Naive thymus-derived CD4-positive, alpha-beta T cell (primary cell): ENCODE measurements at regions of chr6 and their contacts with region 1.

Region 1: DNA sequence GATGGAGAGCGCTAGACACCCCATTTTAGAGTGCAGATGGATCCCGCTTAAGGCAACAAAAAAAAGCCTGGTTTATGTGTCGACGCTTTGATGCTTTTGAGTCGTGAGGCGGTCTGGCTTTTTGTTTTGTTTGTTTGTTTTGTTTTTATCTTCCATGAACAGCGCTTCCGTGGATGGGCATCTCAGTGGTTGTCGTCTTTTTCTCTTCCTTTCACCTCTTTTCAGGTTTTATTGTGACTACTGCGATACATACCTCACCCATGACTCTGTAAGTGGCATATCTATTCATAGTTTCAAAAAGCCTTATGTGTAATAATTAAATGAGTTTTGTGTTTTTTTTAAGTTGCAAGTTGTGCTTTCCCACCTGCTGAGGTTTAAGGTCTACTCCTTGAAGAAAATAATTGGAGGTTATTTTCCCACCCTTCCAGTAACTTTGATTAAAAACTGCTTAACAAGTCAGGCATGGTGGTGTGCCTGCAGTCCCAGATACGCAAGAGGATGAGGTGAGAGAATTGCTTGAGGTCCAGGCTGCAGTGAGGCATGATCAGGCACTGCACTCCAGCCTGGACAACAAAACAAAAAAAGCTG is 476 bp downstream of the SNRPC start:
- DNase-seq: no peak
- ATAC-seq: no peak
- H3K4me3 ChIP-seq: peak overlapping the region; percentile 94
- H3K4me3 Mint-ChIP-seq: no peak overlapping the region
- H3K27ac ChIP-seq: peak overlapping the region; percentile 94
- H3K27ac Mint-ChIP-seq: no peak overlapping the region
- H3K4me1 ChIP-seq: peaks cover 7 to 12% of the 10 kb centered on the region in 2 donors
- H3K4me1 Mint-ChIP-seq: peaks cover 3 to 27% (median 14%) of the 10 kb centered on the region in 7 donors
- H3K27me3 ChIP-seq: no peaks in the 10 kb centered on the region
- H3K27me3 Mint-ChIP-seq: no peaks in the 10 kb centered on the region

Region 2: GRCh38 chr6:34392497-34393190 is 365.1 kb before region 1 on chr6 and contains the start of gene NUDT3:
- CTCF ChIA-PET with region 1: no interaction called
- POLR2A ChIA-PET with region 1: no interaction called
- intact Hi-C with region 1: loop called in 1 of 2 experiments (anchors 2 kb)
- DNase-seq: peak; percentile 88 to 98 (median 93)
- ATAC-seq: peak; percentile 93
- H3K4me3 ChIP-seq: peak within 1 kb of the TSS; percentile 92
- H3K4me3 Mint-ChIP-seq: peak within 1 kb of the TSS in 4 of 10 donors; percentile 79 to 99 (median 98)
- H3K27ac ChIP-seq: peak within 1 kb of the TSS; percentile 85
- H3K27ac Mint-ChIP-seq: peak within 1 kb of the TSS in 8 of 9 donors; percentile 89 to 95 (median 92)
- H3K4me1 ChIP-seq: peaks cover 11 to 16% of the 10 kb centered on the region in 2 donors
- H3K4me1 Mint-ChIP-seq: peaks cover 0 to 28% (median 23%) of the 10 kb centered on the region in 7 donors
- H3K27me3 ChIP-seq: no peaks in the 10 kb centered on the region
- H3K27me3 Mint-ChIP-seq: peaks cover 0 to 2% (median 0%) of the 10 kb centered on the region in 5 donors
- total RNA-seq, gene NUDT3: 16.2 to 29.7 (median 25.4) TPM

Region 3: GRCh38 chr6:34526992-34527728 is 230.6 kb before region 1 on chr6:
- CTCF ChIA-PET with region 1: interaction called, 3 read pairs
- POLR2A ChIA-PET with region 1: no interaction called
- intact Hi-C with region 1: loop called in 1 of 2 experiments (anchors 1 kb)
- DNase-seq: peak; percentile 88 to 96 (median 94)
- ATAC-seq: peak; percentile 100
- H3K4me3 ChIP-seq: peak overlapping the region; percentile 33
- H3K4me3 Mint-ChIP-seq: peak overlapping the region; percentile 20 to 69 (median 46)
- H3K27ac ChIP-seq: peak overlapping the region; percentile 70
- H3K27ac Mint-ChIP-seq: peak overlapping the region; percentile 12 to 89 (median 72)
- H3K4me1 ChIP-seq: peaks cover 7 to 14% of the 10 kb centered on the region in 2 donors
- H3K4me1 Mint-ChIP-seq: peaks cover 4 to 12% (median 8%) of the 10 kb centered on the region in 7 donors
- H3K27me3 ChIP-seq: no peaks in the 10 kb centered on the region
- H3K27me3 Mint-ChIP-seq: peaks cover 0 to 2% (median 0%) of the 10 kb centered on the region in 5 donors

Region 4: GRCh38 chr6:34638834-34639736 is 118.7 kb before region 1 on chr6:
- CTCF ChIA-PET with region 1: no interaction called
- POLR2A ChIA-PET with region 1: no interaction called
- intact Hi-C with region 1: loop called in 1 of 2 experiments (anchors 5 kb)
- DNase-seq: no peak
- ATAC-seq: no peak
- H3K4me3 ChIP-seq: no peak overlapping the region
- H3K4me3 Mint-ChIP-seq: no peak overlapping the region
- H3K27ac ChIP-seq: no peak overlapping the region
- H3K27ac Mint-ChIP-seq: peak overlapping the region in 2 of 9 donors; percentile 5 to 39
- H3K4me1 ChIP-seq: no peaks in the 10 kb centered on the region
- H3K4me1 Mint-ChIP-seq: peaks cover 0 to 20% (median 8%) of the 10 kb centered on the region in 7 donors
- H3K27me3 ChIP-seq: no peaks in the 10 kb centered on the region
- H3K27me3 Mint-ChIP-seq: no peaks in the 10 kb centered on the region

Region 5: GRCh38 chr6:34671801-34672656 is 85.8 kb before region 1 on chr6:
- CTCF ChIA-PET with region 1: no interaction called
- POLR2A ChIA-PET with region 1: interaction called, 3 read pairs
- intact Hi-C with region 1: loop called (anchors 1 to 2 kb)
- DNase-seq: peak; percentile 27 to 83 (median 71)
- ATAC-seq: peak; percentile 99
- H3K4me3 ChIP-seq: peak overlapping the region; percentile 37
- H3K4me3 Mint-ChIP-seq: peak overlapping the region; percentile 72 to 88 (median 81)
- H3K27ac ChIP-seq: peak overlapping the region; percentile 75
- H3K27ac Mint-ChIP-seq: peak overlapping the region; percentile 92 to 97 (median 96)
- H3K4me1 ChIP-seq: peaks cover 35 to 48% of the 10 kb centered on the region in 2 donors
- H3K4me1 Mint-ChIP-seq: peaks cover 61 to 84% (median 74%) of the 10 kb centered on the region in 7 donors
- H3K27me3 ChIP-seq: no peaks in the 10 kb centered on the region
- H3K27me3 Mint-ChIP-seq: no peaks in the 10 kb centered on the region

Region 6: GRCh38 chr6:34791701-34792235 is 34.0 kb after region 1 on chr6 and contains the start of gene BLTP3A:
- CTCF ChIA-PET with region 1: interaction called, 3 read pairs
- POLR2A ChIA-PET with region 1: interaction called, 27 read pairs
- intact Hi-C with region 1: loop called (anchors 1 kb)
- DNase-seq: peak; percentile 60 to 85 (median 73)
- ATAC-seq: peak; percentile 97
- H3K4me3 ChIP-seq: peak within 1 kb of the TSS; percentile 100
- H3K4me3 Mint-ChIP-seq: peak within 1 kb of the TSS; percentile 92 to 100 (median 98)
- H3K27ac ChIP-seq: peak within 1 kb of the TSS; percentile 79
- H3K27ac Mint-ChIP-seq: peak within 1 kb of the TSS; percentile 88 to 97 (median 96)
- H3K4me1 ChIP-seq: peaks cover 8 to 15% of the 10 kb centered on the region in 2 donors
- H3K4me1 Mint-ChIP-seq: peaks cover 24 to 38% (median 30%) of the 10 kb centered on the region in 7 donors
- H3K27me3 ChIP-seq: no peaks in the 10 kb centered on the region
- H3K27me3 Mint-ChIP-seq: no peaks in the 10 kb centered on the region
- total RNA-seq, gene BLTP3A: 10.7 to 12.9 (median 11.9) TPM

Region 7: DNA sequence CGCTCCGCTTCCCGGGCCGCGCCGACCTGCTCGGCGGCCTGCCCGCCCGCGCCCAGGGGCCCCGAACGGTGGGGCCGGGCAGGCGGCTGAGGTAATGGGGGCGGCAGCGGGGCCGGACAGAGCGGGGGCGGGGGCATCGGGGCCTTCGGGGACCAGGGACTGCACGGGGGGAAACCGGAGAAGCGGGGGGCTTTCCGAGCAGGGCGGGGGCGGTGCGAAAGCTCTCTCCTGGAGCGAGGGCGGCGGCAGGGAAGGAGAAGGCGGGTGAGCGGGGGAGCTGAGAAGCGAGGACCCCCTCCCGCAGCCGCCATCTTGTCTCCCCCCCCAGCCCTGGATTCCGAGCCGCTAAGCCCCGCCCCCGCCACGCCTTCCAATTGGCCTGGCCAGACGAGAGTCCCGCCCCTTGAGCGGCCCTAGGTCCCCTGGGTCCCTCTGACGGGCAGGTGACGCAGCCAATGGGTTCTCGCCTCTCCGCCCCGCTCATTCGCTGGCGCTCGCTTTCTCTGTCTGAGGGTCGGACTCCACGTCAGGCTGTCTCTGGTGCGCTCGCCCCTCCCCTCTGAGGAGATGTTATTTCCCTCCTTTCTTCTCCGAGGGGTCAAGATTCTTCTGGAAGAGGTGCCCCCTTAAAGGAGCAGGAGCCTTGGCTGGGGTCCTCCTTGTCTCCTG is 1439.2 kb after region 1 on chr6:
- CTCF ChIA-PET with region 1: no interaction called
- POLR2A ChIA-PET with region 1: no interaction called
- intact Hi-C with region 1: loop called in 1 of 2 experiments (anchors 2 kb)
- DNase-seq: peak; percentile 94 to 100 (median 98)
- ATAC-seq: peak; percentile 96
- H3K4me3 ChIP-seq: peak overlapping the region; percentile 81
- H3K4me3 Mint-ChIP-seq: peak overlapping the region; percentile 88 to 95 (median 92)
- H3K27ac ChIP-seq: peak overlapping the region; percentile 84
- H3K27ac Mint-ChIP-seq: peak overlapping the region; percentile 69 to 96 (median 92)
- H3K4me1 ChIP-seq: peaks cover 33 to 36% of the 10 kb centered on the region in 2 donors
- H3K4me1 Mint-ChIP-seq: peaks cover 19 to 59% (median 47%) of the 10 kb centered on the region in 7 donors
- H3K27me3 ChIP-seq: no peaks in the 10 kb centered on the region
- H3K27me3 Mint-ChIP-seq: peaks cover 0 to 3% (median 0%) of the 10 kb centered on the region in 5 donors